ENCODE measurements at regions of chr12 and their contacts with region 1.

Region 1: DNA sequence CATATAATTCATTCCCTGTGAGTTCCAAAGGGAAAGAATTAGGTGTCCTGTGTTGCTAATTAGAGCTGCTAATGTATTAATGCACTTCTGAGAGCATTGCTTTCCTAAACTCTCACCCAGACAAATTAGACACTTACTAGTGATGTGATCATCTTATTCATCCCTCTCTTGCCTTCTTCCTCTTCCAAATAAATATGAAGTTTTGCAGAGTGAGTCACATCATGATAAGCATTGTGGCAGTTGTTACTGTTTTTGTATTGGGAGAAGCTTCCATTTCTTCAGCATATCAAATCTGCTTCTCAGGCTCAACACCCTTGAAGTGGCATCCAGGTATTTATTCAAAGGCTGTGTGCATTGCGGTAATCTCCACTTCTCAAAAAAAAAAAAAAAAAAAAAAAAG is 37.3 kb upstream of the E2F7 start:
- DNase-seq: no peak
- H3K4me3 ChIP-seq: no peak overlapping the region
- H3K27ac ChIP-seq: peak overlapping the region; percentile 33; the same call in 1 of the 2 replicates
- H3K4me1 ChIP-seq: peaks cover 13% of the 10 kb centered on the region
- H3K27me3 ChIP-seq: no peaks in the 10 kb centered on the region
- CTCF ChIP-seq: no peak

Region 2: GRCh38 chr12:76685246-76685678 is 417.4 kb before region 1 on chr12:
- CTCF ChIA-PET with region 1: no interaction called
- POLR2A ChIA-PET with region 1: no interaction called
- intact Hi-C with region 1: no loop called
- DNase-seq: no peak
- H3K4me3 ChIP-seq: no peak overlapping the region
- H3K27ac ChIP-seq: no peak overlapping the region
- H3K4me1 ChIP-seq: peaks cover 7% of the 10 kb centered on the region
- H3K27me3 ChIP-seq: no peaks in the 10 kb centered on the region
- CTCF ChIP-seq: no peak

Region 3: DNA sequence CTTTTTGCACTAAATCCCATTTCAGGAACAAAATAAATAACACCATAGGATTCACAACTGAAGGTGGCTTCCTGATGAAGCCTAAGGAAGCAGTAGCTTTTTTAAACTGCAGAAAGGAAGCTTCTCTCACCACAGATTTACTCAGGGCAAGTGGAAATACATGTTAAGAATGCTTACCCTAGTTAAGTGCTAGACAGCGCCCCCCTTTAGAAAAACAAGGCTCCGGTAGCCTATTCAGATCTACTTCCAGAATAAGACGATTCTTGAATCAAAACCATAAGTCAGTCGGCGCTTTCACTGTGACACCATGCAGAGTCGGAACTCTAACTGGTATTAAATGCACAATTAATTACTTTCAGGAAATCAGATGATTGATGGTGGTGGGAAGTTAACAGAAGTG is 79.2 kb before region 1 on chr12:
- CTCF ChIA-PET with region 1: interaction called, 10 read pairs
- POLR2A ChIA-PET with region 1: no interaction called
- intact Hi-C with region 1: no loop called
- DNase-seq: no peak
- H3K4me3 ChIP-seq: no peak overlapping the region
- H3K27ac ChIP-seq: no peak overlapping the region
- H3K4me1 ChIP-seq: no peaks in the 10 kb centered on the region
- H3K27me3 ChIP-seq: no peaks in the 10 kb centered on the region
- CTCF ChIP-seq: no peak

Region 4: DNA sequence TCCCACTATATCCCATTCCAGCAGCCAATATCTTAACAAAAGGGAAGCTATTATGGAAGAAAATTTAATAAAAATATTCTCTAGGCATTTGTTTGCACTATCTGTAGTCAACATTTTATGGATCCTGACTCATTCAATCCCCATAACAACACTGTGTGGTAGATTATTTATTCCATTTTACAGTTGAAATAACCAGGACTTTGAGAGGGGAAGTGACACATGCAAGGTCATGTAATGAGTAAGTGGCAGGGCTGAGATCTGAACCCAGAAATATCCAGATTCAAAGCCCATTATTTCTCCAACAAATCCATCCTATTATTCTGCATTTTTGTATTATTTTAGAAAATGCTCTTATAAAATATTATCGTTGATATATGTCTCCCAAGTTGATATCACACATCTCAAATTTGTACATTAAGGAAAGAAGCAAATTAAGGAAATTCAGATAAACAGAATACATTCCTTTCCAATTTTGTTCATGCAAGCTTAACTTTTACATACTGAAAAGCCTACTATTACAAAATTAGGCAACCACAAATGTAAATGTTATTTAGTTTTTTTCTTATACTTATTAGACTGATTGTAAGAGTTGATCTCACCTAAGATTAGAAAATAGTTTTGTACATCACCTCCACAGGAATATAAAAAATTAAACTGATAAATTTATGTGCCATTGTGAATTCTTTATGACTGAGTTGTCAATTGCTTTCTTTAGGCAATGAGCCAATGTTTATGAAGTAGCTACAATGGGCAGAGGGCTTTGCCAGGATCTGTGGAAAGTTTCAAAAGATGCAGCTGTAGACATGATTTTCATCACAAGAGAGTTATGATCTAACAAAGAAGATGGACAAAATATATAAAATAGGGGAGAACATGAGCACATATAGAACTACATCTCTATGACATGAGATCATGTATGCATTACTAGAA is 17.7 kb after region 1 on chr12:
- CTCF ChIA-PET with region 1: interaction called, 10 read pairs
- POLR2A ChIA-PET with region 1: no interaction called
- intact Hi-C with region 1: no loop called
- DNase-seq: no peak
- H3K4me3 ChIP-seq: no peak overlapping the region
- H3K27ac ChIP-seq: peak overlapping the region; percentile 34
- H3K4me1 ChIP-seq: peaks cover 18% of the 10 kb centered on the region
- H3K27me3 ChIP-seq: no peaks in the 10 kb centered on the region
- CTCF ChIP-seq: no peak

Measured in PC-9 (cell line).